CD4-positive, alpha-beta T cell (primary cell): ENCODE measurements at regions of chr9 and their contacts with region 1.

Region 1: DNA sequence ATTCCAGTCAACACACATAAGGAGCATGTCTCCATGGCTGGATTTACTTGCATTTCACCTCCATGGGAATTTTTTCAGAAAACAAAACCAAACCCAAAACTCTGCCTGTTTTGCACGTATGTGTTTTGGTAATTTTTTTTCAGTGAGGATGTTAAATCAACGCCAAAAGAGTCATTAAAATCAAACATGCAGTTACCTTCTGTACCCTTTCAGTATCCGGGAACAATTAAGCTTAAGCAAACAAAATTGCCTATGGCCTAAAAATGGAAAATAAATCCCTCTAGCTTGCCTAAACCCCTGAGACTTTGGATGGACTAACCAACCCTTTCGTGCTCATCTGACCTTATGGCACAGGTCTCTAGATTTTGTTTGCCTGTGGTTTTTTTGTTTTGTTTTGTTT is 209.2 kb upstream of the KLF4 start:
- DNase-seq: no peak
- ATAC-seq: no peak
- H3K4me3 ChIP-seq: no peak overlapping the region
- H3K4me3 Mint-ChIP-seq: no peak overlapping the region
- H3K27ac ChIP-seq: no peak overlapping the region
- H3K27ac Mint-ChIP-seq: no peak overlapping the region
- H3K4me1 ChIP-seq: no peaks in the 10 kb centered on the region
- H3K4me1 Mint-ChIP-seq: no peaks in the 10 kb centered on the region
- H3K27me3 ChIP-seq: no peaks in the 10 kb centered on the region
- H3K27me3 Mint-ChIP-seq: no peaks in the 10 kb centered on the region
- CTCF ChIP-seq: no peak

Region 2: GRCh38 chr9:107732781-107733522 is 34.2 kb after region 1 on chr9:
- CTCF ChIA-PET with region 1: no interaction called
- POLR2A ChIA-PET with region 1: no interaction called
- intact Hi-C with region 1: loop called in 1 of 2 experiments (anchors 1 kb)
- DNase-seq: no peak
- ATAC-seq: no peak
- H3K4me3 ChIP-seq: no peak overlapping the region
- H3K4me3 Mint-ChIP-seq: no peak overlapping the region
- H3K27ac ChIP-seq: no peak overlapping the region
- H3K27ac Mint-ChIP-seq: no peak overlapping the region
- H3K4me1 ChIP-seq: no peaks in the 10 kb centered on the region
- H3K4me1 Mint-ChIP-seq: no peaks in the 10 kb centered on the region
- H3K27me3 ChIP-seq: no peaks in the 10 kb centered on the region
- H3K27me3 Mint-ChIP-seq: no peaks in the 10 kb centered on the region
- CTCF ChIP-seq: no peak